ACHN (cell line): ENCODE measurements at regions of chr17 and their contacts with region 1.

Region 1: DNA sequence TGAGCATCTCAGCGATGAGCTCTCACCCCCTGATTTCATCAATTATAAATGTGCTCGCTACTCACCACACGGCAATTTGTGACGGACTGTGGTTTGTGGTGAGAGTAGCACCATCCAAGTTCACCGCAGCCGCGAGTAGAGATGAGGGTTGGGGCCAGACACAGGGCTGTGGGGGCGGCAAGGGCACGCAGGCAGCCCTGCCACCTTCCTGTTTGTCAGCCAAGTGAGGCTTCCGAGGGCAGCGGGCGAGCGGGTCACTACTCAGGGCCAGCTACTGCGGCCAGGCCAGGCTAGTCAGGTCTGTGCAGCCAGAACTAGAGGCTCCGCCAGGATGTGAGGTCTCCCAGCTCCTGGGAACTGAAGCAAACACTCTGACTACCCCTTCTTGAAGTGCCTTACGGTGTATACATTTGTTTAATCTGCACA is 39.6 kb upstream of the MEOX1 start:
- DNase-seq: no peak

Region 2: DNA sequence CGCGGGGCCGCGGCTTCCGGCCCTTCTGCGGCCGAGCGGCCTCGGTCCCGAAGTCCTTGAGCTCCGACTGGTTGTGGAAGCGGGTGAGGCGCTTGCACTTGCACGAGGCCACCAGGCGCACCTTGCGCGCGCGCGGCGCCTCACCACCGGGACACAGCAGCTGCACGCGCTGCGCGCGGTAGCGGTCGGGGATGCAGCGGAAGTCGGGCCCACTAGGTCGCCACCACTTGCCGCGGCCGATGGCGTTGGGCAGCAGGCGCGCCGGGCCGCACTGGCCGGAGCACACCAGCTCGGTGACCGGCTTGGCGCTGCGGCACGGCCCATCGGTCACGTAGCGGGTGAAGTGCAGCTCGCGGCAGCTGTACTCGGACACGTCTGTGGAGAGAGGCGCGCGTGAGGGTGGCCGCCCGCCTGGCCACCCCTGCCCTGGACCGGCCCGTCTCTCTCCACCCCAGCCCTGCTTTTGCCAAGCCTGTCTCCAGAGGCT is 54.1 kb after region 1 on chr17:
- in situ Hi-C with region 1: loop called (anchors 5 kb)
- DNase-seq: no peak